ENCODE measurements at regions of chr5 and their contacts with region 1.

Region 1: DNA sequence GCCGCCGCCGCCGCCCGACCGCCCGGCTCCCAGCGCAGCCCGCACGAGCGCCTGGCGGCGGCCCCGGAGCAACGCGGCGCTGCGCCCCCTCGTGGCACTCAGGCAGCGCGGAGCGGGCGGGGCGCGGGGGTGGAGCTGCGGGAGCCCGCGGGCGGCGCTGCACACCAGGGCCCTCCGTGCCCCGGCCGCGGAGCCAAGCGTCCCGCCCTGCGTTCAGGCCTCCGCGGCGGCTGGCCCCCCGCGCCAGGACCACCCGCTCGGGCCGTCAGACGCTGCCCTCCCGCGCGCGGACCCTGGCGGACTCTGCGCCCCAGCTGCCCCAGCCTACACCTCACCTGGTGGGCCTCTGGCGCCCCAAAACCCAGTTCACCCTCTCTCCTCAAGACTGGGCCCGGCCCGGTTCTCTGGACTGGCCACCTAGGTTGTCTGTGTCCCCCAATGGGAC is at the start of gene RASGEF1C:
- DNase-seq: peak; percentile 60
- H3K4me3 ChIP-seq: peak within 1 kb of the TSS; percentile 31 to 32
- H3K27ac ChIP-seq: no peak within 1 kb of the TSS
- H3K4me1 ChIP-seq: peaks cover 4% of the 10 kb centered on the region
- H3K27me3 ChIP-seq: no peaks in the 10 kb centered on the region
- CTCF ChIP-seq: peak in 2 of 3 experiments; percentile 14 to 63
- POLR2A ChIP-seq: no peak
- total RNA-seq, gene RASGEF1C: 8.0 to 8.5 TPM

Region 2: DNA sequence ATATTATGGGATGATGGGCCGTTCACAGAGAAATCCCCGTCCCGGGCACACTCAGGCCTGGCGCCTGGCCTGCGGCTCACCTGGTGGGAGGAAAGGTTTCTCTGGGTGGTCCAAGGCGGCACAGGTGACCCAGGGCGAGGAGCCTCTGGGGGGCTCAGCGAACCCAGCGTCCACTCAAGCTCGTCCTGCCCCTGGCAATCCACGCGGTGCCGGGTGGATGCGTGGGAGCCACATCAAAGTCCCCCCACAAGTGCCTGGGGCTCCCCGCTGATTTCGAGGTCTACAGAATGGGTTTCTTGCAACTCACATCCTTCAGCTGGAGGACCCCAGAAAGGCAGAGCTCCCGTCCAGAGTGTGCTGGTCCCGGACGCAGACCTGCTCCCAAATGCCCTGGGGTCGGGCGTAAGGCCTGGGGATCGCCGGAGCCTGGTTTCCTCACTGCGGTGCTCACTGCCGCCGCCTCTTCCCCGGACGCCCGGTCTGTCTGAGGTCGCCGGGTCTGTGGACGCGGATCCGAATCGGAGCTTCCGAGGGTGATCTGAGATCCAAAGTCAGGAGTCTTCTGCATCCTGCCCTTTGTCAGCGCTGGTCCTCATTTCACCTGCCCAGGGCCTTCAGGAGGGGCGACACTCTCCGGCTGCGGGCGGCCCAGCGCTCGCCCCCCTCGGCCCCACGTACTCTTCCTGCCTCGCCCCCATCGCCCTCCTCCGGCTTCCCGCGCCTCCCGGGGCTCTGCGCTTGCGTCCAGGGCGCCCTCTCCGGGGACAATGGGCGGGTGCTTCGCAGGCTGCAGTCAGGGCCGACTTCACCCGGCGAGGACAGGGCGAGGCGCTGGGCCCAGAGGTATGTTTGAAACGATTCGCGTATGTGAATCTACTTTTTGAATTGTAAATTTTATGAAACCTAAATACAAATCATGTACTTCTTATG is 678.8 kb before region 1 on chr5:
- intact Hi-C with region 1: no loop called
- DNase-seq: peak; percentile 68
- H3K4me3 ChIP-seq: peak overlapping the region; percentile 41 to 64
- H3K27ac ChIP-seq: no peak overlapping the region
- H3K4me1 ChIP-seq: no peaks in the 10 kb centered on the region
- H3K27me3 ChIP-seq: no peaks in the 10 kb centered on the region
- CTCF ChIP-seq: no peak
- POLR2A ChIP-seq: no peak

Region 3: GRCh38 chr5:179812135-179812846 is 396.9 kb before region 1 on chr5:
- intact Hi-C with region 1: loop called (anchors 5 kb)
- DNase-seq: no peak
- H3K4me3 ChIP-seq: no peak overlapping the region
- H3K27ac ChIP-seq: no peak overlapping the region
- H3K4me1 ChIP-seq: peaks cover 8% of the 10 kb centered on the region
- H3K27me3 ChIP-seq: no peaks in the 10 kb centered on the region
- CTCF ChIP-seq: no peak
- POLR2A ChIP-seq: no peak

Region 4: GRCh38 chr5:179936976-179937681 is 272.0 kb before region 1 on chr5:
- intact Hi-C with region 1: no loop called
- DNase-seq: no peak
- H3K4me3 ChIP-seq: no peak overlapping the region
- H3K27ac ChIP-seq: no peak overlapping the region
- H3K4me1 ChIP-seq: no peaks in the 10 kb centered on the region
- H3K27me3 ChIP-seq: no peaks in the 10 kb centered on the region
- CTCF ChIP-seq: no peak
- POLR2A ChIP-seq: no peak

Region 5: DNA sequence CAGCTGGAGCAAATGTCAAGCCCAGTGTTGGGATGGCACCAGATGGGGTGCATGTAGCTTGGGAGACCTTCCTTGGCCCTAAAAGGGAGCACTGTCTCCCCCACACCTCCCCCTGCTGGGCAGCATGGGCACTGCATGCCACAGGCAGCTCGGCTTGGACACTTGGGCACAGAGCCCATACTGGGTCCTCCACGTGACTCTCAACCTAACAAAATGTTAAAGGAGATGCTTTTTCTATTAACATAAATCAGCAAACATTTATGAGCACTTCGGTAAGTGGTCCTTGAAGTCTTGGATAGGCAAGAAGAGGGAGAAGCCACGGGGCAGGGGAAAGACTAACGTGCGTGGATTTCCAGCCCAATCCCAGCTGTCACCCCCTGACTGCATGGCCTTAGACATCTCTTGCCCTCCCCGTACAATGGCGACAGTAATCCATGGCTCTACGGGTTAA is 106.6 kb after region 1 on chr5:
- intact Hi-C with region 1: no loop called
- DNase-seq: peak; percentile 77
- H3K4me3 ChIP-seq: no peak overlapping the region
- H3K27ac ChIP-seq: no peak overlapping the region
- H3K4me1 ChIP-seq: no peaks in the 10 kb centered on the region
- H3K27me3 ChIP-seq: no peaks in the 10 kb centered on the region
- CTCF ChIP-seq: peak; percentile 70 to 91 (median 77)
- POLR2A ChIP-seq: no peak

Measured in testis (tissue), 5 donors.